Upper lobe of right lung (tissue), 1 donor: ENCODE measurements at regions of chr19 and their contacts with region 1.

Region 1: DNA sequence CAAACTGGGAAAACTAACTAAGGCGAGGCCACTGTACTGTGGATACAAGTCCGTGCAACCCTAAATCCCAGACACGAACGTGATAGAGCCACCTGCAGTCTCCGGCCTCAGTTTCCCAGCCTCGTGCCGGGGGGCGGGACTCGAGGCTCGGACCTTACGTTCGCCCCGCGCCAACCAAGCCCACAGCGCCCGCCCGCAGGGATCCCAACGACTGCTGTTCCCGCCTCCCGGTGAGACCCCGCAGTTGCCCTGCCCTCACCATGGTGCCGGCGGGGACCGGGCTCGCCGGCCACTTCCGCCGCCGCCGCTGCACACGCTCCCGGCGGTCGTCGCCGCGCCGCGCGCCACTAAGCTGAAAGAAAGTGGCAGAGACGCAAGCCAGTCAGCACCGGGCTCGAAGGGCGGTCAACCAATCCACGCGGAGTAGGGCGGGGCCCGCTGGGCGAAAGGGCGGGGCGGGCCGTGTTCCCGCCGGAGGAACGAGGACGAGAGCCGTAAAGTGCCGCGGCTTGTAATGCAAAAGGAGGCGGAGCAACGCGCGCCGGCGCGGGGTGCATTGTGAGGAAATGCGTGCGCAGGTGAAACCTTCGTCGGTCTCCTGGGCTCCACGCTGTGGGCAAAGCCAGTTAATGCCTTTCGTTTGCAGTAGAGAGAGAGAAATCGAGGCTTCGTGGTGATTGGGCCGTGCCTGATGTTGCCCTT is at the start of gene LSM4:
- DNase-seq: peak; percentile 99
- ATAC-seq: peak; percentile 96
- H3K4me3 ChIP-seq: peak within 1 kb of the TSS; percentile 88
- H3K27ac ChIP-seq: peak within 1 kb of the TSS; percentile 96
- H3K4me1 ChIP-seq: peaks cover 53% of the 10 kb centered on the region
- H3K27me3 ChIP-seq: no peaks in the 10 kb centered on the region
- CTCF ChIP-seq: peak; percentile 29
- total RNA-seq, gene LSM4: 76.9 TPM

Region 2: GRCh38 chr19:18281082-18282020 is 41.6 kb before region 1 on chr19 and contains the start of gene JUND:
- intact Hi-C with region 1: loop called (anchors 5 kb)
- DNase-seq: peak; percentile 99
- ATAC-seq: peak; percentile 85
- H3K4me3 ChIP-seq: peak within 1 kb of the TSS; percentile 88
- H3K27ac ChIP-seq: peak within 1 kb of the TSS; percentile 100
- H3K4me1 ChIP-seq: peaks cover 33% of the 10 kb centered on the region
- H3K27me3 ChIP-seq: no peaks in the 10 kb centered on the region
- CTCF ChIP-seq: no peak
- total RNA-seq, gene JUND: 204 TPM